ENCODE measurements at regions of chr1 and their contacts with region 1.

Region 1: GRCh38 chr1:224427346-224427745 is 7.3 kb downstream of the WDR26 start:
- DNase-seq: peak; percentile 39
- H3K4me3 ChIP-seq: no peak overlapping the region
- CTCF ChIP-seq: no peak

Region 2: DNA sequence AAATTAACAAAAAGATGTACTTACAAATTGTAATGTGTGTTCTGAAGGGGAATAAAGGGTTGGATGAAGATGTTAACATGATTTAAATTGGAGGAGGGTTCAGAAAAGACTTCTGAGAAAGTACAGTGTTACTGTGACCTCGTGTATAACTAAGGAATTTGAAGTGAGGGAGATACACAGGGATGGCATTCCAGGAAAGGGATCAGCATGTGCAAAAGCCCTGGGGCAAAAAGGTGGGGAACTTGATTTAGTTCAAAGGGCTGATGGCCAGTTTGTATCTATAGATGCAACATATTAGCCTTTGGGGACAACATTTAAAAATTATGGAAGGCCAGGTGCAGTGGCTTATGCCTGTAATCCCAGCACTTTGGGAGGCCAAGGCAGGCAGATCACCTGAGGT is 277.6 kb before region 1 on chr1:
- in situ Hi-C with region 1: no loop called
- DNase-seq: no peak
- H3K4me3 ChIP-seq: no peak overlapping the region
- CTCF ChIP-seq: no peak

Region 3: DNA sequence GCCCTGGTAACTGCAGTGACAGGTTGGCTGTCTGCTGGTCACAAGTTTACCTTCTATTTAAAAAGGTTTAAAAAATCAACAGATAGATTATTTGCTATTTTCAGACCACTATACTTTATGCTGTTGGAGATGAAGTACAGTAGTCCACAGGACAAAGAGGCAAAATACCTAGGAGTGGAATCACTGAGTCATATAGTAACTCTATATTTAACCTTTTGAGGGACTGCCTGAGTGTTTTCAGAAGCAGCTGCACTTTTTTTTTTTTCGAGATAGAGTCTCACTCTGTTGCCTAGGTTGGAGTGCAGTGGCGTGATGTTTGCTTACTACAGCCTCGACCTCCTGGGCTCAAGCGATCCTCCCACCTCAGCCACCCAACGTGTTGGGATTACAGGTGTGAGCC is 58.9 kb before region 1 on chr1:
- in situ Hi-C with region 1: loop called (anchors 5 kb)
- DNase-seq: no peak
- H3K4me3 ChIP-seq: no peak overlapping the region
- CTCF ChIP-seq: no peak